Naive thymus-derived CD4-positive, alpha-beta T cell (primary cell): ENCODE measurements at regions of chr11 and their contacts with region 1.

Region 1: GRCh38 chr11:47578524-47579460 is at the starts of genes KBTBD4 and NDUFS3:
- DNase-seq: peak; percentile 85 to 95 (median 88)
- ATAC-seq: peak; percentile 97
- H3K4me3 ChIP-seq: peak within 1 kb of the TSS; percentile 95
- H3K4me3 Mint-ChIP-seq: peak within 1 kb of the TSS; percentile 95 to 100 (median 99)
- H3K27ac ChIP-seq: peak within 1 kb of the TSS; percentile 80
- H3K27ac Mint-ChIP-seq: peak within 1 kb of the TSS; percentile 97 to 100 (median 99)
- H3K4me1 ChIP-seq: peaks cover 26 to 28% of the 10 kb centered on the region in 2 donors
- H3K4me1 Mint-ChIP-seq: peaks cover 17 to 51% (median 41%) of the 10 kb centered on the region in 7 donors
- H3K27me3 ChIP-seq: no peaks in the 10 kb centered on the region
- H3K27me3 Mint-ChIP-seq: no peaks in the 10 kb centered on the region
- total RNA-seq, gene KBTBD4: 15.0 to 26.5 (median 20.9) TPM
- total RNA-seq, gene NDUFS3: 68.6 to 116 (median 85.2) TPM

Region 2: DNA sequence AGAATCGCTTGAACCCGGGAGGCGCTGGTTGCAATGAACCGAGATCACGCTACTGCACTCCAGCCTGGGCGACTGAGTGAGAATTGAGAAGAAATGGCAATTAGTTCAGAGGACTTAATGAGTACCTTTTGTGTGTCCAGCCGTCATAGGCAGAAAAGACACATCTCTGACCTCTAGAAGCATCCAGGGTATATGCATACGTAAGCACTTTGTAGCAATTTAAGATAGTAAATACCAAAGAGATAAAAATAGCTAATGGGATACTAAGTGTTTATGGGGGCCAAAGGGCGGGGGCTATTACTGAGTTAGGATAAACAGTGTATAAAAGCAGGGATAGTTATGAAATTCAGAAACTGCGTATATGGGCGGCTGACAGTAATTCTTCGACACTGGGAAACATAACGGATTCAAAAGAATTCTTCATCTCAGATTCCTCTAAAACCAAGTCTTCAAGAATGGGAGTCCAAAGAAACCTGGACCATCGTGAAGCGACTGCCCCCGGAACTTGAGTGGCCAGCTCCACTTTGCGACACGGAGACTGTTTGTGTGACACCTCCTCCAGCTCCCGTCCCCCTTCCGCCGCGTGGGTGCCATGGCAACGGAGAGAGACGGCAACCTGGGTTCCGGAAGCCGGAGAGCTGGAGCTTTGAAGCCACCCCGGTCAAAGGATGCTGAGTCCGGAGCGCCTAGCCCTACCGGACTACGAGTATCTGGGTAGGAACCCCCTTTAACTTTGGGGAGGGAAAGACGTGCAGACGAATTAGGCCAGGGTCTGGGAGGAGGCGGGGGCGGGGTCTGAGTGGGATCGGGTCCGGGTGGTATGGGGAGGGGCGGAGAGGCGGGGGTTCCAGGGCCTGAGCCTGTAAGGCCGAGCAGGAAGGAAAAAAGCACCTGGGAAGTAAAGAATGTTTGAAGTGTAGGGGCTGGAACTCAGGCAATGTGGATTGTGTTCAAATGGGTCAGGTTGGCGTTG is 642.4 kb before region 1 on chr11 and contains the start of gene CSTPP1:
- CTCF ChIA-PET with region 1: no interaction called
- POLR2A ChIA-PET with region 1: interaction called, 3 read pairs
- intact Hi-C with region 1: loop called (anchors 1 to 10 kb)
- DNase-seq: peak; percentile 80 to 92 (median 89)
- ATAC-seq: peak; percentile 99
- H3K4me3 ChIP-seq: peak within 1 kb of the TSS; percentile 76
- H3K4me3 Mint-ChIP-seq: peak within 1 kb of the TSS; percentile 86 to 100 (median 92)
- H3K27ac ChIP-seq: peak within 1 kb of the TSS; percentile 72
- H3K27ac Mint-ChIP-seq: peak within 1 kb of the TSS; percentile 89 to 98 (median 92)
- H3K4me1 ChIP-seq: peaks cover 0 to 11% of the 10 kb centered on the region in 2 donors
- H3K4me1 Mint-ChIP-seq: peaks cover 5 to 24% (median 21%) of the 10 kb centered on the region in 7 donors
- H3K27me3 ChIP-seq: no peaks in the 10 kb centered on the region
- H3K27me3 Mint-ChIP-seq: peaks cover 8 to 19% (median 9%) of the 10 kb centered on the region in 5 donors
- total RNA-seq, gene CSTPP1: 9.3 to 18.6 (median 16.1) TPM

Region 3: DNA sequence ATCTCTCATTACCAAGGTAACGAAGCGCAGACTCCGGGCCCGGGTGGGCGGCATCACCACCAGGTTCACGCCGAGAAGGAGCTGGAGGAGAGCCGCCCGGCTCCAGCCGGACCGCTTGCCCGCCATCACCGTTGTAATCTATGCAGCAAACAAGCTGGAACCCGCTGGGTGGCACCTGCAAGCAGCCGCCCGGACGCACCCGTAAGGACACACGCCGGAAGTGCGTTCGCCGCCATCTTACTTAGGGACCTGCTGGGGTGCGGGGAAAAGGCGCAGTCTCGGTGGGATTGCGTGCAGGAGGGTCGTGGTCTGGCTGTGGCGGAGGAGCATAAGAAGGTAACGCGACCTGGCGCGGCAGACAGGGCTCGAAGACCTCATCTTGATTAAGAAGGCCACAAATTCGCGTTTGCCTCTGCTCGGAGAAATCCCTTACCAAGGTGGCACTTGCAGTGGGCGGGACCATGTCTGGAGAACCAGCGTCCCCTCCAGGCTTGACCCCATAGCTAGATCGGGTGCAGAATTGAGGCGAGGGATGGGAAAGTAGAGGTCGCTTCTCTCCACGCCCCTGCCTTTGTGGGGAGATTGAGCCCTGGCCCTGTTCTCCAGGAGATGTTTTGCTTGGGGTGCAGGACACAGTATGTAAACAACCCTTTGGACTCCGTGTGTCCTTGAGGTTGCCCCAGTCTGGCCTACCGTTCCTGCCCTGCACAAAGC is 330.0 kb before region 1 on chr11 and contains the start of gene ACP2:
- CTCF ChIA-PET with region 1: no interaction called
- POLR2A ChIA-PET with region 1: interaction called, 4 read pairs
- intact Hi-C with region 1: loop called (anchors 1 kb)
- DNase-seq: peak; percentile 83 to 91 (median 86)
- ATAC-seq: peak; percentile 99
- H3K4me3 ChIP-seq: peak within 1 kb of the TSS; percentile 93
- H3K4me3 Mint-ChIP-seq: peak within 1 kb of the TSS; percentile 93 to 100 (median 98)
- H3K27ac ChIP-seq: peak within 1 kb of the TSS; percentile 87
- H3K27ac Mint-ChIP-seq: peak within 1 kb of the TSS; percentile 94 to 100 (median 98)
- H3K4me1 ChIP-seq: peaks cover 11 to 15% of the 10 kb centered on the region in 2 donors
- H3K4me1 Mint-ChIP-seq: peaks cover 13 to 39% (median 29%) of the 10 kb centered on the region in 7 donors
- H3K27me3 ChIP-seq: no peaks in the 10 kb centered on the region
- H3K27me3 Mint-ChIP-seq: no peaks in the 10 kb centered on the region
- total RNA-seq, gene ACP2: 17.6 to 38.1 (median 24.3) TPM

Region 4: GRCh38 chr11:47514825-47515647 is 63.8 kb before region 1 on chr11:
- CTCF ChIA-PET with region 1: no interaction called
- POLR2A ChIA-PET with region 1: no interaction called
- intact Hi-C with region 1: no loop called
- DNase-seq: peak in 1 of 9 donors; percentile 41
- ATAC-seq: peak; percentile 76
- H3K4me3 ChIP-seq: no peak overlapping the region
- H3K4me3 Mint-ChIP-seq: peak overlapping the region; percentile 30 to 71 (median 66)
- H3K27ac ChIP-seq: no peak overlapping the region
- H3K27ac Mint-ChIP-seq: peak overlapping the region; percentile 60 to 94 (median 82)
- H3K4me1 ChIP-seq: peaks cover 27 to 41% of the 10 kb centered on the region in 2 donors
- H3K4me1 Mint-ChIP-seq: peaks cover 52 to 98% (median 82%) of the 10 kb centered on the region in 7 donors
- H3K27me3 ChIP-seq: no peaks in the 10 kb centered on the region
- H3K27me3 Mint-ChIP-seq: no peaks in the 10 kb centered on the region

Region 5: GRCh38 chr11:47565340-47566148 is 13.2 kb before region 1 on chr11 and contains the start of gene PTPMT1:
- CTCF ChIA-PET with region 1: interaction called, 5 read pairs
- POLR2A ChIA-PET with region 1: interaction called, 67 read pairs
- intact Hi-C with region 1: loop called (anchors 1 kb)
- DNase-seq: peak; percentile 42 to 75 (median 57)
- ATAC-seq: peak; percentile 92
- H3K4me3 ChIP-seq: peak within 1 kb of the TSS; percentile 88
- H3K4me3 Mint-ChIP-seq: peak within 1 kb of the TSS; percentile 81 to 89 (median 86)
- H3K27ac ChIP-seq: peak within 1 kb of the TSS; percentile 89
- H3K27ac Mint-ChIP-seq: peak within 1 kb of the TSS; percentile 78 to 95 (median 84)
- H3K4me1 ChIP-seq: peaks cover 3 to 8% of the 10 kb centered on the region in 2 donors
- H3K4me1 Mint-ChIP-seq: peaks cover 0 to 32% (median 24%) of the 10 kb centered on the region in 7 donors
- H3K27me3 ChIP-seq: no peaks in the 10 kb centered on the region
- H3K27me3 Mint-ChIP-seq: no peaks in the 10 kb centered on the region
- total RNA-seq, gene PTPMT1: 20.5 to 32.9 (median 22.7) TPM

Region 6: GRCh38 chr11:47642099-47642855 is 63.5 kb after region 1 on chr11 and contains the start of gene MTCH2:
- CTCF ChIA-PET with region 1: no interaction called
- POLR2A ChIA-PET with region 1: no interaction called
- intact Hi-C with region 1: loop called (anchors 1 kb)
- DNase-seq: peak; percentile 92 to 97 (median 95)
- ATAC-seq: peak; percentile 97
- H3K4me3 ChIP-seq: peak within 1 kb of the TSS; percentile 85
- H3K4me3 Mint-ChIP-seq: peak within 1 kb of the TSS; percentile 92 to 99 (median 96)
- H3K27ac ChIP-seq: peak within 1 kb of the TSS; percentile 83
- H3K27ac Mint-ChIP-seq: peak within 1 kb of the TSS; percentile 94 to 99 (median 97)
- H3K4me1 ChIP-seq: peaks cover 8 to 11% of the 10 kb centered on the region in 2 donors
- H3K4me1 Mint-ChIP-seq: peaks cover 17 to 32% (median 25%) of the 10 kb centered on the region in 7 donors
- H3K27me3 ChIP-seq: no peaks in the 10 kb centered on the region
- H3K27me3 Mint-ChIP-seq: no peaks in the 10 kb centered on the region
- total RNA-seq, gene MTCH2: 19.8 to 88.6 (median 21.1) TPM

Region 7: DNA sequence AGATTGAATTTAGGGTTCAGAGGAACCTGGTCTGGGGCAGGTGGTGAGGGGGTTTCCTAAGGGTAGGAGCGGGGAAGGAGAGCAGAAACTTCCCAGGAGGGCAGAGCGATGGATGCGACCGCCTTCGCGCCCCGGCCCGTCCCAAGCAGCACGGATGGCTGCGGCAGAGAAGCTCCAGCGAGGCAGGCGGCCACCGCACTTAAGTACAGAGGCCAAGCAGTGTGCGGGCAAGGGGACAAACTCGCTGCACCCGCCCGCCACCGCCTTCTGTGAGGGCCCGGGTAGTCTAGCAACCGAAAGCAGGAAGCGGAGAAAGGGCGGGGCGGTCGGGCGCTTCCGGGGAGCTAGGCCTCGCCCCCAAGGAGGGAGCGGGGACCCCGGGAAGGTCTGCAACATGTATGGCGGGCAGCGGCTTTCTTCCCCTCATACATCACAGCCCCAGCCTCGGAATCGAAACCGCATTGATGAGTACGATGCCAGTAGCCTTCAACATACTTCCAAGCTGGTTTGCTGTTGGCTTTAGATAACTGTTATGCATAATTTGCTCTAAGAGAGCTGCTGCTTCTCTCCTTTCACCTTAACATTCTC is 136.4 kb after region 1 on chr11 and contains the start of gene AGBL2:
- CTCF ChIA-PET with region 1: no interaction called
- POLR2A ChIA-PET with region 1: no interaction called
- intact Hi-C with region 1: loop called (anchors 1 to 5 kb)
- DNase-seq: peak; percentile 61 to 85 (median 82)
- ATAC-seq: peak; percentile 99
- H3K4me3 ChIP-seq: peak within 1 kb of the TSS; percentile 94
- H3K4me3 Mint-ChIP-seq: peak within 1 kb of the TSS; percentile 95 to 99 (median 97)
- H3K27ac ChIP-seq: peak within 1 kb of the TSS; percentile 84
- H3K27ac Mint-ChIP-seq: peak within 1 kb of the TSS; percentile 96 to 99 (median 98)
- H3K4me1 ChIP-seq: peaks cover 7 to 15% of the 10 kb centered on the region in 2 donors
- H3K4me1 Mint-ChIP-seq: peaks cover 0 to 22% (median 15%) of the 10 kb centered on the region in 7 donors
- H3K27me3 ChIP-seq: no peaks in the 10 kb centered on the region
- H3K27me3 Mint-ChIP-seq: no peaks in the 10 kb centered on the region
- total RNA-seq, gene AGBL2: 4.7 to 11.3 (median 8.1) TPM

Region 8: GRCh38 chr11:47766305-47767227 is 187.8 kb after region 1 on chr11:
- CTCF ChIA-PET with region 1: no interaction called
- POLR2A ChIA-PET with region 1: interaction called, 14 read pairs
- intact Hi-C with region 1: loop called (anchors 1 to 5 kb)
- DNase-seq: peak; percentile 60 to 84 (median 79)
- ATAC-seq: peak; percentile 52
- H3K4me3 ChIP-seq: peak overlapping the region; percentile 94
- H3K4me3 Mint-ChIP-seq: peak overlapping the region; percentile 88 to 100 (median 96)
- H3K27ac ChIP-seq: peak overlapping the region; percentile 97
- H3K27ac Mint-ChIP-seq: peak overlapping the region; percentile 96 to 100 (median 99)
- H3K4me1 ChIP-seq: peaks cover 20 to 22% of the 10 kb centered on the region in 2 donors
- H3K4me1 Mint-ChIP-seq: peaks cover 16 to 39% (median 23%) of the 10 kb centered on the region in 7 donors
- H3K27me3 ChIP-seq: no peaks in the 10 kb centered on the region
- H3K27me3 Mint-ChIP-seq: no peaks in the 10 kb centered on the region